ENCODE measurements at regions of chrX and their contacts with region 1.

Region 1: DNA sequence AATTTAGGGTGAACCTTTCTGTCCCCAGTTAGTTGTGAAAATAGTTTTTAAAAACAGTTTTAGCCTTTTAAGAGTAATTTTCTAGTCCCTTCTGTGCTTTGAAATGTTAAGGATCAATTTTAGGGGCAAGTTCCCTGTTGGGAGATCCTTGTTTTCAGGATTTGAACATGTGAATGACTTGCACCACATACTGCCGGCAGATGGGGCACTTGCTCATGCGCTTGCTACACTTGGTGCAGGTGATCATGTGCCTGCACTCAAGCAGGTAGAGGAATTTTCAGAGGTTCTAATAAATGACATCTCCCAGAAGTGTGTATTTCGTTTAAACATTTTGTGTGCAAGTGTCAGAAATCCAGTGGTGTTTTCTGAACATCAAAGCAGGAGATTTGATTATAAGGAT is 195.9 kb downstream of the CHM start:
- DNase-seq: peak; percentile 11
- H3K4me3 ChIP-seq: no peak overlapping the region
- H3K27ac ChIP-seq: no peak overlapping the region
- H3K4me1 ChIP-seq: no peaks in the 10 kb centered on the region
- H3K27me3 ChIP-seq: peaks cover 5% of the 10 kb centered on the region
- CTCF ChIP-seq: peak; percentile 37 to 64

Region 2: DNA sequence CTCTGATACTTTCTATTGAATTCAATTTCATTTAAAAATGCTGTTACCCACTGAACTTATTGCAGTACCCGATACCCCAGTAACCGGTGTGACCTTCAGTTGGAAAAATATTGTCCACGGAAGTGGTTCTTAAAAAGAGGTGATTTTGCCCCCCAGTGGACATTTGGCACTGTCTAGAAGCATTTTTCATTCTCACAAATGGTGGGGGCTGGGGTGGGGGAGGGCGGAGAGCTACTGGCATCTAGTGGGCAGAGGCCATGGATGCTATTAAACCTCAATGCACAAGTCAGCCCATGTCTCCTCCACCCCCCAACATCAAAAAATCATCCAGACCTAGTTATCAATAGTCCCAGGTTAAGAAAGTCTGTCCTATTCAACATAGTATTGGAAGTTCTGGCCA is 215.6 kb after region 1 on chrX:
- CTCF ChIA-PET with region 1: no interaction called
- dilution Hi-C with region 1: no loop called
- in situ Hi-C with region 1: no loop called
- intact Hi-C with region 1: loop called (anchors 2 kb)
- DNase-seq: no peak
- H3K4me3 ChIP-seq: no peak overlapping the region
- H3K27ac ChIP-seq: no peak overlapping the region
- H3K4me1 ChIP-seq: no peaks in the 10 kb centered on the region
- H3K27me3 ChIP-seq: no peaks in the 10 kb centered on the region
- CTCF ChIP-seq: no peak

Region 3: GRCh38 chrX:86171366-86171765 is 319.9 kb after region 1 on chrX:
- CTCF ChIA-PET with region 1: no interaction called
- dilution Hi-C with region 1: no loop called
- in situ Hi-C with region 1: no loop called
- intact Hi-C with region 1: loop called (anchors 1 kb)
- DNase-seq: peak; percentile 51
- H3K4me3 ChIP-seq: no peak overlapping the region
- H3K27ac ChIP-seq: no peak overlapping the region
- H3K4me1 ChIP-seq: no peaks in the 10 kb centered on the region
- H3K27me3 ChIP-seq: no peaks in the 10 kb centered on the region
- CTCF ChIP-seq: peak; percentile 52 to 71

Region 4: DNA sequence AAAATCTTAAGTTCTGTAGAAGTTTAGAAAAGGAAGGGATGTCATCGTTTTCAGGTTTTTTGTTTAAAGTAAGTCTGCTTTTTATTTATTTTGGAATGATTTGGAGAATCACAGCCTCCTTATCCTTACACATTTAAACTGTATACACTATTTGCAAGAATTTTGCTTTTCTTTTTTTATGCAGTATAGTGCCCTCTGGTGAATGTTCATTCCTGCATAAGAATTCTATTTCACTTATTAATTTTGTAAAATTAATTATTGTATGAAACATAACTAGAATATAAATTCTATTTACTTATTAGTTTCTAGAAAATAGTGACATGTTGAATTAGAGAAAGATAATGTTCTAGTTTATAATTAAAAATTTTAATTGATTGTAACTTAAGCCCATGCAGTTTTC is 341.4 kb after region 1 on chrX:
- CTCF ChIA-PET with region 1: no interaction called
- dilution Hi-C with region 1: no loop called
- in situ Hi-C with region 1: no loop called
- intact Hi-C with region 1: loop called (anchors 5 kb)
- DNase-seq: no peak
- H3K4me3 ChIP-seq: no peak overlapping the region
- H3K27ac ChIP-seq: no peak overlapping the region
- H3K4me1 ChIP-seq: no peaks in the 10 kb centered on the region
- H3K27me3 ChIP-seq: peaks cover 2% of the 10 kb centered on the region
- CTCF ChIP-seq: no peak

Region 5: DNA sequence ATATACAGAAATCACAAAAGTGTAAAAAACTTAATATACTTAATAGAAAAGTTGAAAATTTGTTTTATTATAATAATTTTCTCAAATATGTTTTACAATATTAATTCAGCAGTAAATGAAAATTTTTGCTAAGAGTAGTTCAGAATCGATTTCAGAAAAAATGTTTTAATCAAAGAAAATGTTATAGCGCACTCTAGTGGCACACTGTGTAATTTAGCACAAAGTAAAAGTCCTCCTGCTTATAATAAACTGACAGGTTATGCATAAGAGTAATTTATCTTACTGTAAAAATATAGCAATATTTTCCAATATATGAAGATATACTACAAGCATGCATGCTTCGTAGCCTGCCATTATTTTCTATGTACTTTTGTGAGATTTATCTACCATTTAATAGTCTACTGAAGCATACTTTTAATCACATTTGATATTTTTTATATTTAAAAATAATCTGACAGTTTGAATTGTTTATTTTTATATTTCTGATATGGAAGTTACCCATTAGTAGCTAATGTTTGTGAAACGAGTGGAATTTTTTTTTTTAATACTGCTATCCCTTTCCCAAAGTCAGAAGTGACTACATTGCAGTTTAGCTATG is 1448.2 kb after region 1 on chrX:
- CTCF ChIA-PET with region 1: no interaction called
- dilution Hi-C with region 1: no loop called
- in situ Hi-C with region 1: no loop called
- intact Hi-C with region 1: loop called (anchors 5 kb)
- DNase-seq: peak; percentile 1
- H3K4me3 ChIP-seq: no peak overlapping the region
- H3K27ac ChIP-seq: no peak overlapping the region
- H3K4me1 ChIP-seq: no peaks in the 10 kb centered on the region
- H3K27me3 ChIP-seq: peaks cover 2% of the 10 kb centered on the region
- CTCF ChIP-seq: peak; percentile 56 to 65